Naive thymus-derived CD4-positive, alpha-beta T cell (primary cell): ENCODE measurements at regions of chr5 and their contacts with region 1.

Region 1: GRCh38 chr5:65943771-65944170 is 17.4 kb downstream of the ERBIN start:
- DNase-seq: no peak
- ATAC-seq: no peak
- H3K4me3 ChIP-seq: no peak overlapping the region
- H3K4me3 Mint-ChIP-seq: peak overlapping the region in 2 of 10 donors; percentile 39 to 42
- H3K27ac ChIP-seq: no peak overlapping the region
- H3K27ac Mint-ChIP-seq: peak overlapping the region in 3 of 9 donors; percentile 24 to 56 (median 34)
- H3K4me1 ChIP-seq: peaks cover 0 to 5% of the 10 kb centered on the region in 2 donors
- H3K4me1 Mint-ChIP-seq: peaks cover 5 to 66% (median 44%) of the 10 kb centered on the region in 7 donors
- H3K27me3 ChIP-seq: no peaks in the 10 kb centered on the region
- H3K27me3 Mint-ChIP-seq: no peaks in the 10 kb centered on the region

Region 2: DNA sequence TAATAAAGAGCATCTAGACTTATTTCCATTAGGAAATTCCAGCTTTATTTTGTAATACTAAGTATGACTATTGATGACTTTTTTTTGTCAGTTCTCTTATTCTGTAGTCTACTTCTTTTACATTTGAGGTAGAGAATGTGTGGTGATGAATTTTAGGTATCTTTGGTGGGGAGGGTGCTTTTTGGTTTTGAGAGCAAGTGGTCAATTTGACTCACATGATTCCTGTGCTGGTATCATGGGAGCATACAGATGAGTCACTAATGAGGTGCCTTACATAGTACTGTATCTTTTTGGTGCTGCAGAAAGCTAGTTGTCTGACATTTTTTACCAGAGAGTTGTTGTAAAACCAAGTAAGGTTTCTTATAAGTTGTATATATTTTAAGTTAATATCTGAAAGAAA is 17.9 kb after region 1 on chr5:
- CTCF ChIA-PET with region 1: no interaction called
- POLR2A ChIA-PET with region 1: interaction called, 4 read pairs
- intact Hi-C with region 1: loop called in 1 of 2 experiments (anchors 2 kb)
- DNase-seq: no peak
- ATAC-seq: peak; percentile 48
- H3K4me3 ChIP-seq: no peak overlapping the region
- H3K4me3 Mint-ChIP-seq: peak overlapping the region in 7 of 10 donors; percentile 2 to 55 (median 13)
- H3K27ac ChIP-seq: no peak overlapping the region
- H3K27ac Mint-ChIP-seq: peak overlapping the region in 7 of 9 donors; percentile 1 to 44 (median 11)
- H3K4me1 ChIP-seq: peaks cover 4 to 32% of the 10 kb centered on the region in 2 donors
- H3K4me1 Mint-ChIP-seq: peaks cover 22 to 81% (median 47%) of the 10 kb centered on the region in 7 donors
- H3K27me3 ChIP-seq: no peaks in the 10 kb centered on the region
- H3K27me3 Mint-ChIP-seq: no peaks in the 10 kb centered on the region